ENCODE measurements at regions of chr5 and their contacts with region 1.

Region 1: GRCh38 chr5:157342822-157343402 is 77.0 kb downstream of the CYFIP2 start:
- DNase-seq: peak; percentile 62
- ATAC-seq: peak; percentile 23
- H3K4me3 Mint-ChIP-seq: no peak overlapping the region
- H3K27ac Mint-ChIP-seq: peak overlapping the region; percentile 80
- H3K4me1 Mint-ChIP-seq: peaks cover 40% of the 10 kb centered on the region
- H3K27me3 Mint-ChIP-seq: no peaks in the 10 kb centered on the region

Region 2: GRCh38 chr5:157370967-157371366 is 28.1 kb after region 1 on chr5:
- CTCF ChIA-PET with region 1: interaction called, 19 read pairs
- POLR2A ChIA-PET with region 1: no interaction called
- intact Hi-C with region 1: no loop called
- DNase-seq: no peak
- ATAC-seq: no peak
- H3K4me3 Mint-ChIP-seq: no peak overlapping the region
- H3K27ac Mint-ChIP-seq: peak overlapping the region; percentile 71
- H3K4me1 Mint-ChIP-seq: peaks cover 16% of the 10 kb centered on the region
- H3K27me3 Mint-ChIP-seq: no peaks in the 10 kb centered on the region

Region 3: DNA sequence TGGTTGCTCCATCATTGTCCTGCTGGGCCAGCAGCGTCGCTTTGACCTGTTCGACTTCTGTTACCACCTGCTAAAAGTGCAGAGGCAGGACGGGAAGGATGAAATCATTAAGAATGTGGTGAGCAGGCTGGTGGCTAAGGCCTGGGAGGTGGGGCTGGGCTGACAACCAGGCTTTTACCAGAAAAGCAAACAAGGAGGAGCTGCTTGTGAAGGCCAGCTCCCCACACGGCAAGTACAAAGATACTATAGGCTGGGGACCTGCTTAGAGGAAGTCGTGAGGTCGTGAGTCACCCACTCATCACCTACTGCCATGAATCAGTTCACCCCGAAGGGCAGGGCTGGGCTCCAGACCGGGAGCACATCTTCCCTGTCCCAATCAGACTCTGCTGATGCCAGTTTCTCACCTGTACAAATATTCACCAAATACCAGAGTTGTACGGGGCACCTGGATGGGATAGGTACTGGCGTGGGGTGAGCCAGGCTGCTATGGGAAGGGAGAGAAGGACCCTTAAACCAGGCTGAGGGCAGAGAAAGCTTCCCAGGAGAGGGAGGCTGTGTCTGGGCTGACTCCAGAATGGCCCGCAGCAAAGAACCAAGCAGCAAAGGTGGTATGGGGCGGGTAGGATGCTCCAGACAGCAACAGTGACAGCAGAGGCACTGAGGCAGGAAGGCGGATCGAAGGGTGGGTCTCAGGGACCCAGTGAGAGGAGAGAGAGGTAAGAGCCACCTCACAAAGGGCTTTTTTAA is 47.8 kb after region 1 on chr5:
- CTCF ChIA-PET with region 1: interaction called, 7 read pairs
- POLR2A ChIA-PET with region 1: no interaction called
- intact Hi-C with region 1: loop called in 1 of 2 experiments (anchors 5 kb)
- DNase-seq: peak; percentile 88
- ATAC-seq: peak; percentile 98
- H3K4me3 Mint-ChIP-seq: peak overlapping the region; percentile 12
- H3K27ac Mint-ChIP-seq: peak overlapping the region; percentile 96
- H3K4me1 Mint-ChIP-seq: peaks cover 24% of the 10 kb centered on the region
- H3K27me3 Mint-ChIP-seq: no peaks in the 10 kb centered on the region

Region 4: DNA sequence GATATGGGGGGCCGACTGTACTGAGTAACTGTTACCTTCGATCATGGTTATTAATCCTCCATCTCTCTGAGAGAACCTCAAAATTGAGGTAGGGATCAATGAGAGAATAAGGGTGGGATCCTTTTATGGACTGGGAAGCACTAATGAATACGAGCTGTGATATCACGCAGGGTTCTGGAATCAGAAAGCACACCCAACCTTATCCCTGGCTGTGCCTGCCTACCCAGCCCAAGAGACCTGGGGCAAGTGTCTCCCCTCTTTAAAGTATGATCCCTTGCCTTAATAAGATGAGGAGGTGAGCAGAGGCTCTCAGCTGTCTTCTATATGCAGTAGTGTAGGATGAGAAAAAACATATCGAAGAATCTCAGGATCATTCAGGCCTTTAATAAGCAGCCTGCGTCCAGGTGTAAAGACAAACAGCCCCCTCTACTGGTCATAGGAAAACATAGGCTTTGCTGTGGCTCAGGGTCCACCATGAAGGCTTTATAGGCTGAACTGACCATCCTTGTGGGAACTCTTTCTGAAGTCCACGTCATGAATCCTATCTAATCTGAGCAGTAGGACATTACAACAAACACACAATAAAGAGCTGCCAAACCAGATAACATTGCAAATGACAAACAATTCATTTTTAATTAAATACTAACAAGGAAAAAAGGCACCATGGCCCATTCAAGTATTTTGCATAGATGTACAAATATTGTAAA is 133.9 kb after region 1 on chr5:
- CTCF ChIA-PET with region 1: interaction called, 5 read pairs
- POLR2A ChIA-PET with region 1: no interaction called
- intact Hi-C with region 1: loop called in 1 of 2 experiments (anchors 5 kb)
- DNase-seq: peak; percentile 42
- ATAC-seq: peak; percentile 68
- H3K4me3 Mint-ChIP-seq: no peak overlapping the region
- H3K27ac Mint-ChIP-seq: no peak overlapping the region
- H3K4me1 Mint-ChIP-seq: peaks cover 9% of the 10 kb centered on the region
- H3K27me3 Mint-ChIP-seq: no peaks in the 10 kb centered on the region

Region 5: GRCh38 chr5:157855404-157855994 is 512.6 kb after region 1 on chr5:
- CTCF ChIA-PET with region 1: no interaction called
- POLR2A ChIA-PET with region 1: no interaction called
- intact Hi-C with region 1: no loop called
- DNase-seq: peak; percentile 48
- ATAC-seq: no peak
- H3K4me3 Mint-ChIP-seq: no peak overlapping the region
- H3K27ac Mint-ChIP-seq: no peak overlapping the region
- H3K4me1 Mint-ChIP-seq: peaks cover 59% of the 10 kb centered on the region
- H3K27me3 Mint-ChIP-seq: no peaks in the 10 kb centered on the region